ENCODE measurements at regions of chr11 and their contacts with region 1.

Region 1: GRCh38 chr11:62855571-62856332 is 16.4 kb upstream of the WDR74 start:
- DNase-seq: peak; percentile 99
- H3K4me3 ChIP-seq: peak overlapping the region; percentile 94
- H3K27ac ChIP-seq: peak overlapping the region; percentile 92
- H3K4me1 ChIP-seq: peaks cover 45% of the 10 kb centered on the region
- CTCF ChIP-seq: no peak

Region 2: DNA sequence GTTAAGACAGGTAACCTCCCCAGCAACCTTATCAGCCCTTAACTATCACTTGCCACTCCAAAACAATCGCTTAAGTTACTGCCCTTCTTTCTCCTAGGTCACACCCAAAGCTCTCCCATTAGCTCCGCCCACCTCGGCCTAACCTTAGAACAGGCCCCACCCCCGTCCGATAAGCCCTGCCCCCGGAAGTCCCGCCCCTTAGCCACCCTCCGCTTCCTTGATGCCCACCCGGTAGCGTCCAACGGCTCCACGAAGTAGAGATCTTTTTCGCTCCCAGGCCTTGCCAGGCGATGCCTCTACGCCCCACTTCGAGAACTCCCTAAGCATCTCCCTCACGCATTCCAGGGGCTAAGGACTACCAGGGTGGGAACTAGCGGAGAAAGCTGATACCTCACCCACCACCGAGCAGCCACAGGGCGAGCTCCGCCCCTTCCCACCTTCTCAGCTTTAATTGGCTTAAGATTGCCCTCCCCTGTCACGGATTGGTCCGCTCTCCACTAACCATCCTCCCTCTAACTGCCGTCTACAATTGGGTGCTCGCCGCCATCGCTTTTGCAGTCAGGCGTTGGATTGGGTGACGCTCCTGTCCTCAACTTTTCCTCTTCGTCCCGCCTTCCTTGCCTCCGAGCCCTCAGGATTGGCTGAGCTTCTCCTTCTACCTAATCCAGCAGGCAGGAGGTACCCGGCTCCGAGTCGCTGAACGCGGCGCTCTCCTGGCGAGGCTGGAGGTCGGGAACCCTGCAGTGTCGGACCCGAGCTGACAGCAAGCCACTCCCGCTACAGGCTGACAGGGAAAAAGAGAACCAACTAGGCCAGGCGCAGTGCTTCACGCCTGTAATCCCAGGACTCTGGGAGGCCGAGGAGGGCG is 101.8 kb before region 1 on chr11 and contains the start of gene ZBTB3:
- CTCF ChIA-PET with region 1: no interaction called
- POLR2A ChIA-PET with region 1: interaction called, 14 read pairs
- intact Hi-C with region 1: no loop called
- DNase-seq: peak; percentile 99
- H3K4me3 ChIP-seq: peak within 1 kb of the TSS; percentile 71
- H3K27ac ChIP-seq: peak within 1 kb of the TSS; percentile 60
- H3K4me1 ChIP-seq: peaks cover 20% of the 10 kb centered on the region
- CTCF ChIP-seq: no peak
- total RNA-seq, gene ZBTB3: 11.1 and 11.8 TPM in 2 replicates

Region 3: DNA sequence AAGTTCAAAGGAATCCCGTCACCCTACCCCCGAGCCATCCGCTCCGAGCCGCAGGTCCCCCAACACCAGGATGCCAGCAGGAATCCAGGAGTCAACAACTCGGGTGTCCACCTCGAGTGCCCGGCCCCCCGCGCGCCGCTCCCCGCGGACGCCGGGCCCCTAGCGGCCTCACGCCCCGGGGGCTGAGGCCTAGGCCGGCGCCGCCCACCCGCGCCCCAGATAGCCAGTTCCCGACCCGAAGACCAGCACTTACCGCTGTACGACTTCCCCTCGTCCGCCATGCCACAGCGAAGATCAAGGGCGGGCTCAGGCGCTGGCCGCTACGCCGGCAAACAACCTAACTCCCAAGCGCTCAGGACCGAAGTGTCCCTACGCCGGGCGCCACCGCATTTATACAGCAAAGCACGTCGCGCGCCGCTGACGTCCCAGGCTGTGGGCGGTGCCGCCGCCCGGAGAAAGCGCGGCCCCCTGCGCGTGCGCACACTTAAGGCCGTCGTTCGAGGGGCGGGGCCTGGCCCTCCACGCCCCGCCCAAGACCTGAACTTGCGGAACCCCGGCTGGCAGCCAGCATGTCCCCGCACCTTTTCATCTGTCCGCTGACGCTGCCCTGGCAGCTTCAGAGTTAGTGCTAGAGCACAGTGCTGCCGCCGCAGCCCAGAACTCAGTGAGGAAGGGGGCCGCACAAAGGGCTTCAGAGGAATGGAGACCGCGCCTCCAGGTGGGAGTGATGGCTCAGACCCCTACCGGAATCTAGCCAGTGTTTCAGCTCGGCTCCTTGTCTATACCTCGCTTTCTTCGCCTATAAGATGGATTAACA is 50.5 kb before region 1 on chr11 and contains the start of gene NXF1:
- CTCF ChIA-PET with region 1: no interaction called
- POLR2A ChIA-PET with region 1: interaction called, 11 read pairs
- intact Hi-C with region 1: no loop called
- DNase-seq: peak; percentile 97
- H3K4me3 ChIP-seq: peak within 1 kb of the TSS; percentile 89
- H3K27ac ChIP-seq: peak within 1 kb of the TSS; percentile 77
- H3K4me1 ChIP-seq: peaks cover 31% of the 10 kb centered on the region
- CTCF ChIP-seq: 0 out of 2 replicates have a peak, but pooled peaks have one; percentile 27
- total RNA-seq, gene NXF1: 35.1 and 53.3 TPM in 2 replicates

Region 4: DNA sequence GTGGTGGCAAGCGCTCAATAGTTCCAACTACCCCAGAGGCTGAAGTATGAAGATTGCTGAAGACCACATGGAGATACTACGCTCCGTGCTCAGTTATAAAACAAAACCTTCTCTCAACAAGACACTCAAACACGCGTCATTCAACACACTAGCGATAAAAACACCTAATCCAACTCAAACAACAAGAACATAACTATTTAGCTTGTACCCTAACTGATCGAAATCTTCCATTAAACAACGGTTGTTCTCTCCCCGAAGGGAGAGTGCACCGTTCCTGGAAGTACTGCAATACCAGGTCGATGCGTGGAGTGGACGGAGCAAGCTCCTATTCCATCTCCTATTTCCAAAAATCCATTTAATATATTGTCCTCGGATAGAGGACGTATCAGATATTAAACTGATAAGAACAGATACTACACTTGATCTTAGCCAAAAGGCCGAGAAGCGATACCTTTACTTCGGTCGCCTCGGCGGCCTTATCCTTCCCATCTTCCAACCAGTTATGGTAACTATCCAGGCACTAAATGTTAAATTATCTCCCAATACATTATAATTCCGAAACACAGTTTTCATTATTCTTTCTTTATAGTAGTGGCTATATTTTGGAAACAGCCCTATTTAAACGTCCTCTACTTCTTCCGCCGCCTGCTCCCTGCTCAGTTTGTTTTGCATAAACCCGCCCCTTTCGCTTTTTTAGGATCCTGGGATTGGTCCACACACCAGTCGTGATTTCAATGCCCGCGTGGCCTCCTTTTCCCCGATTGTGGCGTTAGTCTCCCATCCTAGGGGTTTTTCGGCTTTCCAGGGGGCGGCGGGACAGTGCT is 14.2 kb before region 1 on chr11:
- CTCF ChIA-PET with region 1: interaction called, 3 read pairs
- POLR2A ChIA-PET with region 1: interaction called, 70 read pairs
- intact Hi-C with region 1: no loop called
- DNase-seq: peak; percentile 97
- H3K4me3 ChIP-seq: peak overlapping the region; percentile 94
- H3K27ac ChIP-seq: peak overlapping the region; percentile 90
- H3K4me1 ChIP-seq: peaks cover 29% of the 10 kb centered on the region
- CTCF ChIP-seq: no peak

Region 5: DNA sequence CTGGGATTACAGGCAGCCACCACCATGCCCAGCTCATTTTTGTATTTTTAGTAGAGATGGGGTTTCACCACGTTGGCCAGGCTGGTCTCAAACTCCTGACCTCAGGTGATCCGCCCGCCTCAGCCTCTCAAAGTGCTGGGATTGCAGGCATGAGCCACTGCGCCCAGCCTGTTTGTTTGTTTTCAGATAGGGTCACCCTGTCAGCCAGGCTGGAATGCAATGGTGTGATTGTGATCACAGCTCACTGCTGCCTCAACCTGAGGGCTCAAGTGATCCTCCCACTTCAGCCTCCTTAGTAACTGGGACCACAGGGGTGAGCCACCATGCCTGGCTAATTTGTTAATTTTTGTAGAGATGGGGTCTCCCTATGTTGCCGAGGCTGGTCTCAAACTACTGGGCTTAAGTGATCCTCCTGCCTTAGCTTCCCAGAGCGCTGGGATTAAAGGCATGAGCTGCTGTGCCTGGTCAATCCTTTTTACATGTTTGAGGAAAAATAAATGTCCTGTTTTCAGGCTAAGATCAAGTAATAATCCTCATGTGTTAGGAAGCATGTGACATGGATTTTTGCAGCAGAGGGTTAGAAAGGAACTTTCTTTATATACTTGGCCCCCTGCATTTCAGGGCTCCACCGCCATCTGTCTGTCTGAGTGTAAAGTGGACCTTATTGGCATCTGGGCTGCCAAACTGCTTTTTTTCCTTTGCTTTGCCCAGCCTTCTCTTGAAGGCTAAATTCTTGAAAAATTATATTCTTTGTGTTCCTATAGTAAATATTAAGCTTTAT is 20.1 kb after region 1 on chr11:
- CTCF ChIA-PET with region 1: no interaction called
- POLR2A ChIA-PET with region 1: interaction called, 42 read pairs
- intact Hi-C with region 1: no loop called
- DNase-seq: no peak
- H3K4me3 ChIP-seq: no peak overlapping the region
- H3K27ac ChIP-seq: no peak overlapping the region
- H3K4me1 ChIP-seq: peaks cover 13% of the 10 kb centered on the region
- CTCF ChIP-seq: no peak

Region 6: DNA sequence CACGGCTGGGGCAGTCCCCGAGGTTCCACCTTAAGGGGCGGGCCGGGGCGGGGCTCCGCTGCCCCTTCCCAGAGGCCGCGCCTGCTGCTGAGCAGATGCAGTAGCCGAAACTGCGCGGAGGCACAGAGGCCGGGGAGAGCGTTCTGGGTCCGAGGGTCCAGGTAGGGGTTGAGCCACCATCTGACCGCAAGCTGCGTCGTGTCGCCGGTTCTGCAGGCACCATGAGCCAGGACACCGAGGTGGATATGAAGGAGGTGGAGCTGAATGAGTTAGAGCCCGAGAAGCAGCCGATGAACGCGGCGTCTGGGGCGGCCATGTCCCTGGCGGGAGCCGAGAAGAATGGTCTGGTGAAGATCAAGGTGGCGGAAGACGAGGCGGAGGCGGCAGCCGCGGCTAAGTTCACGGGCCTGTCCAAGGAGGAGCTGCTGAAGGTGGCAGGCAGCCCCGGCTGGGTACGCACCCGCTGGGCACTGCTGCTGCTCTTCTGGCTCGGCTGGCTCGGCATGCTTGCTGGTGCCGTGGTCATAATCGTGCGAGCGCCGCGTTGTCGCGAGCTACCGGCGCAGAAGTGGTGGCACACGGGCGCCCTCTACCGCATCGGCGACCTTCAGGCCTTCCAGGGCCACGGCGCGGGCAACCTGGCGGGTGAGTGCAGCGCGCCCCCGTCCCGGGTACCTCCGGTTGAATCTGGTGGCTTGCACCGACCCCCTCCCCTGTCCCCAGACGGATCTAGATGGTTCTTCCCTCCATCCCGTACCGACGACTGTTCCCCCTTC is 25.2 kb after region 1 on chr11 and contains the start of gene SLC3A2:
- CTCF ChIA-PET with region 1: no interaction called
- POLR2A ChIA-PET with region 1: interaction called, 42 read pairs
- intact Hi-C with region 1: no loop called
- DNase-seq: peak; percentile 89
- H3K4me3 ChIP-seq: peak within 1 kb of the TSS; percentile 73
- H3K27ac ChIP-seq: peak within 1 kb of the TSS; percentile 74
- H3K4me1 ChIP-seq: peaks cover 28% of the 10 kb centered on the region
- CTCF ChIP-seq: peak; percentile 78
- total RNA-seq, gene SLC3A2: 289 and 291 TPM in 2 replicates

Region 7: DNA sequence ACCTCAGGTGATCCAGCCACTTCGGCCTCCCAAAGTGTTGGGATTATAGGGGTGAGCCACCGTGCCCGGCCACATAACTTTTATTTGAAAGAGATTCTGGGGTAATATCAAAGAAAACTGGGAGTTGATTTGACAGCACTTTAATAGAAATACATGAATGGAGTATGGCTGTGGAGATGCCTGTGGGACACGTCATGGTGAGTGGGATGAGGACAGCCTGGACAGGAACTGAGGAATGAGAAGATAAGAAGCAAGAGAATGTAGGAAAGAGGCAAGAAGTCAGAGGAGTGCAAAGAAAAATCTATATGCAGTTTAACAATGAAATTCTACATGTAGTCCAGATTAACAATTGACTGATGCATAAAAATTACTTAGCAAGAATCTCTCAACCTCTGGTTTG is 98.1 kb after region 1 on chr11:
- CTCF ChIA-PET with region 1: no interaction called
- POLR2A ChIA-PET with region 1: no interaction called
- intact Hi-C with region 1: no loop called
- DNase-seq: no peak
- H3K4me3 ChIP-seq: no peak overlapping the region
- H3K27ac ChIP-seq: no peak overlapping the region
- H3K4me1 ChIP-seq: no peaks in the 10 kb centered on the region
- CTCF ChIP-seq: no peak

Region 8: GRCh38 chr11:63961608-63962412 is 1106.1 kb after region 1 on chr11:
- CTCF ChIA-PET with region 1: interaction called, 3 read pairs
- POLR2A ChIA-PET with region 1: interaction called, 19 read pairs
- intact Hi-C with region 1: no loop called
- DNase-seq: no peak
- H3K4me3 ChIP-seq: no peak overlapping the region
- H3K27ac ChIP-seq: no peak overlapping the region
- H3K4me1 ChIP-seq: peaks cover 4% of the 10 kb centered on the region
- CTCF ChIP-seq: no peak

Measured in OCI-LY7 (cell line).